PC-9 (cell line): ENCODE measurements at regions of chr15 and their contacts with region 1.

Region 1: DNA sequence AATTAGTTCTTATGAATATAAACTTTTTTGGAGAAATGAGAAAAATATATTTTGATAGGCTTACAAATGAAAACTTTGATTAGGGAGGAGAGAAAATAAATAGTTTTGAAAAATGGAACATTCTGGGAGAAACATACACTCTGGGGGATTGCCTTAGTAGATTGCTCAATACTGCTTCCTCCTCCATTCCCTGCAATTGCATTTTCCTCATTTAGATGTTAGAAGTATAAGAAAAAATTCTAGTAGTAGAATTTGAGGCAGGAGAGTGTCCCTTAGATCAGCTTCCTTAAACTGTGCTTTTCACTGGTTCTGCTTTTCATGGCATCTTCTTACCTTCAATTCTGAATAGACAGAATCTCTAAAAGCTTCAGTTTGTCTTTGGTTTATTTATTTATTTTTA is 46.2 kb upstream of the CTDSPL2 start:
- DNase-seq: no peak
- H3K4me3 ChIP-seq: no peak overlapping the region
- H3K27ac ChIP-seq: no peak overlapping the region
- H3K4me1 ChIP-seq: no peaks in the 10 kb centered on the region
- H3K27me3 ChIP-seq: no peaks in the 10 kb centered on the region
- CTCF ChIP-seq: no peak

Region 2: DNA sequence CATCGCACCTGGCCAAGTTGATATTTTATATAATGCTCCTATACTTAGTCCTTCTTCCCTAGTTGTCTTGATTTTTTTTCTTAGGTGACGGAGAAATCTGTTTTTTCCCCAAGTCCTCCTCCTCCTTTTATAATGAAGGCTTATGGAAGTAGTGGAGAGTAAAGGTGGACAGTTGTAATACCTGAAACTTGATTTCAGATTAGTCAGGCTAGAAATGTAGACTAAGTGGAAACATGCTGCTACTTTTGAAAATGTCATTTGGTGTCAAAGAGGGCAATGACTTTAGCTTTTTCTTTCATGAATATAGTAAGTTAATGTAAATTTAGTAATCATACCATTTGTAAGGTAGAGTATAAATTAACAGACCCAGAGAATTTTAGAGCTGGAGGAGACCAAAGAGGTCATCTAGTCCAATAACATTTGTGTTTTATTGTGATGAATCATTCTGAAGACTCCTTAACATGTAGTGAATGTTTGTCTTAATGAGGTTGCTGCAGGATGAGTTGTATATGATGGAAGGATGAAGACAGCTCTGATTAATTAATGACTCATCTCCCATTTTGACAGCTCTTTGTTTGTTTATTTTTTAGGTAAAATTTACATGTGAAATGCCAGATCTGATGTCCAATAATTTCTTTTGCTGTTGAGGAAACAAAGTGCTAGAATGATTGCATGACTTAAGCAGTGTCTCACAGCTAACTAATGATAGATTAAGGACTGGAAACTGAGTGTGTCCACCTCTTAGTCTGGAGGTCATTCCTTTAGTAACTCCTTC is 54.8 kb after region 1 on chr15:
- CTCF ChIA-PET with region 1: no interaction called
- POLR2A ChIA-PET with region 1: interaction called, 19 read pairs
- intact Hi-C with region 1: no loop called
- DNase-seq: peak in 1 of 2 experiments; percentile 36
- H3K4me3 ChIP-seq: no peak overlapping the region
- H3K27ac ChIP-seq: no peak overlapping the region
- H3K4me1 ChIP-seq: no peaks in the 10 kb centered on the region
- H3K27me3 ChIP-seq: no peaks in the 10 kb centered on the region
- CTCF ChIP-seq: no peak

Region 3: DNA sequence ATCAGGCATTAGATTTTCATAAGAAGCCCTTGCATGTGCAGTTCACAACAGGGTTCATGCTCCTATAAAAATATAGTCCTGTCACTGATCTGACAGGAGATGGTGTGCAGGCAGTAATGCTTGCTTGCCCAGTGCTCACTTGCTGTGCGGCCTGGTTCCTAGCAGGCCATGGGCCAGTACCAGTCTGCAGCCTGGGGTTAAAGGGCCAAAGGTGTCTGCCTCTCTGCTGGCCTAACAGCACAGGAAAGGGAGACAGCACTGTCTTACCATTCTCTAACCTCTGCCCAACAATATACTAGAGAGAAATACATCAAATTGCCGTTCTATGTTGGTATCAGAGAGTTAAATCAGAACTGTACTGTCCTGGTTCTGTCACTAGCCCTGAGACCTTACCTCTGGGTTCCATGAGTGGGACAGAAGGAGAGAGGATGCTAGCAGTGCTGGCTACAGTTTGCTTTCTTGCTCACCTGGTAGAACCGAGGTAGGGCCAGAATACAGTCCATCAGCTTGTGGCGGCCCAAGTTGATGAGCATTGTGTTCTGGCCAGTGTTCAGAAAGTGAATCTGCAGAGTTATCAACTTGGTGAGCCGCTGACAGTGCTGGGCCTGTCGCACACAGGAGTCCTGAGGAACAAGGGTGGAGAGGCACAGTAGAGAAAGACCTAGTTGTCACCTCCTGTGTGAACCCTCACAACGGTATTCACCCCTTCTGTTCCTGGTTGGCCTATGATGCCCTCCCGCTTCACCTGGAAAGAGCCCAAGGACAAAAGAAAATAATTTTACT is 184.3 kb after region 1 on chr15:
- CTCF ChIA-PET with region 1: no interaction called
- POLR2A ChIA-PET with region 1: no interaction called
- intact Hi-C with region 1: no loop called
- DNase-seq: no peak
- H3K4me3 ChIP-seq: no peak overlapping the region
- H3K27ac ChIP-seq: no peak overlapping the region
- H3K4me1 ChIP-seq: no peaks in the 10 kb centered on the region
- H3K27me3 ChIP-seq: no peaks in the 10 kb centered on the region
- CTCF ChIP-seq: no peak